Left colon (tissue), 2 donors: ENCODE measurements at regions of chr3 and their contacts with region 1.

Region 1: GRCh38 chr3:38108649-38109579 is 28.0 kb downstream of the ACAA1 start:
- DNase-seq: no peak
- ATAC-seq: no peak

Region 2: GRCh38 chr3:37765591-37766488 is 343.1 kb before region 1 on chr3:
- intact Hi-C with region 1: no loop called
- DNase-seq: no peak
- ATAC-seq: no peak

Region 3: DNA sequence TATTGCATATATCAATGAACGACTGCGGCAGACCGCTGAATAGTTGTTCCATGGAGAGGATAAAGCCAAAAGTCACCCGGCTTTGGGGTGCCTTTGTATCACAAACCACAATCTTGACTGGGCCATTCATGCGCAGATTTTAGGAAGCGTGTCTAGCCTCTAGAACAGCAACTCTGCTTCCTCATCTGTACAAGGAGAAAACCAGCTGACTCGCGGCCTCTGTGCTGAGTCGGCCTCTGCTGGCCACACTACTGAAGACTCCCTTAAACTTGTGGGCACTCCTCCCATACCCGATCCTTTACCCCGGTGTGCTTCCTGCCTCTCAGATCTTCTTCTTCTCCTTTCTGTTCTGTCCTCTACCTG is 69.0 kb before region 1 on chr3:
- intact Hi-C with region 1: loop called in 1 of 2 experiments (anchors 10 kb)
- DNase-seq: peak; percentile 74 to 81
- ATAC-seq: peak; percentile 78